A673 (cell line): ENCODE measurements at regions of chr2 and their contacts with region 1.

Region 1: DNA sequence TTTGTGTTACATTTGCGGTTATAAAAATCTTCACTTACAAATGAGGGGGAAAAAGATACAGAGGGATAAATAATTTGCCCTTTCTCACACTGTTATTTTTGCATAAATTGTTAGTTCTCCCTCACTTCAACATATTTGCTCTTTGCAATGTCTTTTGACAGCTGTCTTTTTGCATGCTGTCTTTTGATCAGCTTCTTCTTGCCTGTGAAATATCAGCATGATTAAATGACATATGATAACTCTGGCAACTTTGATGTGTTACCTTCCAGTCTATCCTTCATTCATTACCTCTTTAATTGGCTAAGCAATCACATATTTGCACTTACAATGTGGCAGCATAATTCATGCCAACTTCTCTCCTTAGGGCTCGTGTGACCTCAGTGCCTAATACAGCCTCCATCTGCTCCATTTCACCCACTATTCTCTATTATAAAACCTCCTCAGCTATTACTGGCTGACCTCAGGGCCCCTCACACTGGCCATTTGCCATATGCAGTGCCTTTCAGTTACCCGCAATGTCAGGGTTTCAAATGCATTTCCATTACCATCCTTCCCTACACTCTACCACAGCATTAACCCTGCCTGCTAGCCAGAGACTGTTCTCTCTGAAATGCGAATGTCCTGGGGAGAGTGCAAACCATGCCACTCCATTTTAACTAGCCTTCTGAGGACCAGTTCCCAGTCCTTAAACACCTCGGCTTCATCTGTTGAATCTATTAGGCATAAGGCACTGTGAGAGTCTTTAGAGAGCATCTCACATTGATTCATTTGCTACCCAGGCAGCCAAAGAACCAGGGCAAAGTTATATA is 1056.6 kb upstream of the CHAC2 start:
- DNase-seq: no peak
- H3K4me3 ChIP-seq: no peak overlapping the region
- H3K27ac ChIP-seq: no peak overlapping the region
- H3K4me1 ChIP-seq: no peaks in the 10 kb centered on the region
- H3K27me3 ChIP-seq: no peaks in the 10 kb centered on the region
- CTCF ChIP-seq: no peak

Region 2: GRCh38 chr2:52429740-52430139 is 281.3 kb before region 1 on chr2:
- CTCF ChIA-PET with region 1: no interaction called
- POLR2A ChIA-PET with region 1: no interaction called
- intact Hi-C with region 1: no loop called
- DNase-seq: no peak
- H3K4me3 ChIP-seq: no peak overlapping the region
- H3K27ac ChIP-seq: no peak overlapping the region
- H3K4me1 ChIP-seq: no peaks in the 10 kb centered on the region
- H3K27me3 ChIP-seq: peaks cover 5% of the 10 kb centered on the region
- CTCF ChIP-seq: no peak

Region 3: DNA sequence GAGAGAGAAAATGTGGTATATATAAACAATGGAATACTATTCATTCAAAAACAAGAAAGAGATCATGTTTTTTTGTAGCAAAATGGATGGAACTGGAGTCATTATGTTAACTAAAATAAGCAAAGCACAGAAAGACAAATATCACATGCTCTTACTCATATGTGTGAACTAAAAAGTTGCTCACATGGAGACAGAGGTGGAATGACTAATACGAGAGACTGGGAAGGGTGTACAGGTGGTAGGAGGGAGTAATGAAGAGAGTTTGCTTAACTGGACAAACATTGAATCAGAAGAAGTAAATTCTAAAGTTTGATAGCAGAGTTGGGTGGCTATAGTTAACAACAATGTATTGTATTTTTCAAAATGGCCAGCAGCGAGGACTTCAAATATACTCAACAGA is 24.1 kb before region 1 on chr2:
- CTCF ChIA-PET with region 1: no interaction called
- POLR2A ChIA-PET with region 1: no interaction called
- intact Hi-C with region 1: loop called (anchors 1 kb)
- DNase-seq: no peak
- H3K4me3 ChIP-seq: no peak overlapping the region
- H3K27ac ChIP-seq: no peak overlapping the region
- H3K4me1 ChIP-seq: no peaks in the 10 kb centered on the region
- H3K27me3 ChIP-seq: no peaks in the 10 kb centered on the region
- CTCF ChIP-seq: no peak

Region 4: GRCh38 chr2:52821626-52822025 is 110.6 kb after region 1 on chr2:
- CTCF ChIA-PET with region 1: no interaction called
- POLR2A ChIA-PET with region 1: no interaction called
- intact Hi-C with region 1: no loop called
- DNase-seq: no peak
- H3K4me3 ChIP-seq: no peak overlapping the region
- H3K27ac ChIP-seq: no peak overlapping the region
- H3K4me1 ChIP-seq: no peaks in the 10 kb centered on the region
- H3K27me3 ChIP-seq: no peaks in the 10 kb centered on the region
- CTCF ChIP-seq: 0 out of 2 replicates have a peak, but pooled peaks have one; percentile 10